Activated CD4-positive, alpha-beta T cell treated with anti-CD3 and anti-CD28 coated beads for 36 hours (primary cell): ENCODE measurements at regions of chr15 and their contacts with region 1.

Region 1: DNA sequence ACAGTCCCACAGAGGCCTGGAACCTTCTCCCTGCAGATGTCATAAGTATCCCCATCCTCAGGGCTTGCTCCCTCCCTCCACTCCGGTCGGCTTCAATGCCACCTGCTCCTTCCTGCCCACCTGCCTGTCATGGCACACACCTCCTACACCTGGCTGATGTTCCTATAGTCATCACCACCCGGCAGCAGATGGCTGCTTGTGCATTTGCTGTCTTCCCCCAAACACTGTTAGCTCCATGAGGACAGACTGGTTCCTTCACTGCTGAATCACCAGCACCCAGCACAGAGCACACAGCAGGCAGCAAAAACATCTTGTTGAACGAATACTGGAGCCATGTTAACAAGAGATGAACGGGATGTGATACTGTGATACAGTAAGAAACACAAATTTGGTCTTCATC is 14.8 kb downstream of the TARS3 start:
- DNase-seq: no peak
- ATAC-seq: no peak
- H3K4me3 Mint-ChIP-seq: no peak overlapping the region
- H3K27ac Mint-ChIP-seq: no peak overlapping the region
- H3K4me1 Mint-ChIP-seq: peaks cover 1% of the 10 kb centered on the region
- H3K27me3 Mint-ChIP-seq: no peaks in the 10 kb centered on the region

Region 2: DNA sequence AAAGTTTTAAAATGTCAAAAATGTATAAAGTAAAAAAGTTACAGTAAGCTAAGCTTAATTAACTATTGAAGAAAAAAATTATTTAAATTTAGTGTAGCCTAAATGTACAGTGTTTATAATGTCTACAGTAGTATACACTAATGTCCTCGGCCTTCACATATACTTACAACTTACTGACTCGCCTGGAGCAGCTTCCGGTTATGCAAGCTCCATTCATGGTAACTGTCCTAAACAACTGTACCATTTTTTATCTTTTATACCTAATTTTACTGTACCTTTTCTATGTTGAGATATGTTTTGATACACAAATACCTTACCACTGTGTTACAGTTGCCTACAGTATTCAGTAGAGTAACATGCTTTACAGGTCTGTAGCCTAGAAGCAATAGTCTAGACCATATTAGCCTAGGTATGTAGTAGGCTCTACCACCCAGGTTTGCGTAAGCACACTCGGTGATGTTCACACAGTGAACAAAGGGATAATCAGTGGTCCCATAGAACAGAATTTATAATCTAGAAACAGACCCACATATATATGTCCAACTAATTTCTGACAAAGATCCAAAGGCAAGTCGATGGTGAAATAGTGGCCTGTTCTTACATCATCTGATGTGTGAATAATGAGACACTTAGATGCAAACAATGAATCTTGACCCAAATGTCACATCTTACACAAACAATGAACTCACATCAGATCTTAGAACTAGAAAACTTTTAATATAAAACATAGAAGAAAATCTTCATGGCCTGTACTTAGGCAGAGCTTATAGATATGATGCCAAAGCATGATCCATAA is 39.9 kb before region 1 on chr15:
- CTCF ChIA-PET with region 1: no interaction called
- POLR2A ChIA-PET with region 1: no interaction called
- intact Hi-C with region 1: loop called in 1 of 2 experiments (anchors 5 kb)
- DNase-seq: no peak
- ATAC-seq: no peak
- H3K4me3 Mint-ChIP-seq: no peak overlapping the region
- H3K27ac Mint-ChIP-seq: peak overlapping the region; percentile 35
- H3K4me1 Mint-ChIP-seq: no peaks in the 10 kb centered on the region
- H3K27me3 Mint-ChIP-seq: no peaks in the 10 kb centered on the region